Calu3 (cell line): ENCODE measurements at regions of chr14 and their contacts with region 1.

Region 1: GRCh38 chr14:94636522-94637412 is 24.6 kb downstream of the SERPINA3 start:
- DNase-seq: no peak
- H3K4me3 Mint-ChIP-seq: no peak overlapping the region
- H3K27ac Mint-ChIP-seq: no peak overlapping the region
- H3K4me1 Mint-ChIP-seq: peaks cover 24% of the 10 kb centered on the region
- H3K27me3 Mint-ChIP-seq: peaks cover 20% of the 10 kb centered on the region
- CTCF ChIP-seq: peak; percentile 29

Region 2: DNA sequence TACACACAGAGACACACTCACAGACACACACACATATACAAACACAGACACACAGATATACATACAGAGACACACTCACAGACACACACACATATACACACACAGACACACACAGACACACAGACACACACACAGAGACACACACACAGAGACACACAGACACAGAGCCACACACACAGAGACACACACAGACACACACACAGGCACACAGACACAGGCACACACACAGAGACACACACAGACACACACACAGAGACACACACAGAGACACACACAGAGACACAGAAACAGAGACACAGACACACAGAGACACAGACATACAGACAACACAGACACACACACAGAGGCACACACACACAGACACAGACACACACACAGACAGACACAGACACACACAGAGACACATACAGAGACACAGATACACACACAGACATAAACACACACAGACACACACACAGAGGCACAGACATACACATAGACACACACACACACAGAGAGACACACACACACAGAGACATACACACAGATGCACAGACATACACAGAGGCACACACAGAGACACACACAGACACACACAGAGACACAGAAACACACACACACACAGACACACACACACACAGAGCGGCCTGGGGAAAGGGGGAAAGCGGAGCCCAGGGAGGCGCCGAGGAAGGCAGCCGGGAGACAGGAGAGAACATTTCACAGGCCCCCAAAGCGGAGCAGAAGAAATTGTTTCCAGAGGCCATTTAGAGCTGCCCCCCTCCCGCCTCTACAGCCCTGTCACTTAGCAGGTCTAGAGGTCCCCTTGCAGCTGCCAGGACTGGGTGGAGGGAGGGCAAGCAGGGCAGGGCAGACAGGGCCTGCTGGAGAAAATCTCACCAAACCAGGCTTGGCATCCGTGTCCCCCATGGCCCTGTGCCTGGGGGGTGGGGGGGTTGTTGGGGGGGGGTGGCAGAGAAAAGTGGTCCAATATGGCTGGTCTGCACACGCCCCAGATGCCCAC is 14.3 kb after region 1 on chr14:
- CTCF ChIA-PET with region 1: no interaction called
- intact Hi-C with region 1: no loop called
- DNase-seq: no peak
- H3K4me3 Mint-ChIP-seq: no peak overlapping the region
- H3K27ac Mint-ChIP-seq: no peak overlapping the region
- H3K4me1 Mint-ChIP-seq: no peaks in the 10 kb centered on the region
- H3K27me3 Mint-ChIP-seq: no peaks in the 10 kb centered on the region
- CTCF ChIP-seq: no peak

Region 3: DNA sequence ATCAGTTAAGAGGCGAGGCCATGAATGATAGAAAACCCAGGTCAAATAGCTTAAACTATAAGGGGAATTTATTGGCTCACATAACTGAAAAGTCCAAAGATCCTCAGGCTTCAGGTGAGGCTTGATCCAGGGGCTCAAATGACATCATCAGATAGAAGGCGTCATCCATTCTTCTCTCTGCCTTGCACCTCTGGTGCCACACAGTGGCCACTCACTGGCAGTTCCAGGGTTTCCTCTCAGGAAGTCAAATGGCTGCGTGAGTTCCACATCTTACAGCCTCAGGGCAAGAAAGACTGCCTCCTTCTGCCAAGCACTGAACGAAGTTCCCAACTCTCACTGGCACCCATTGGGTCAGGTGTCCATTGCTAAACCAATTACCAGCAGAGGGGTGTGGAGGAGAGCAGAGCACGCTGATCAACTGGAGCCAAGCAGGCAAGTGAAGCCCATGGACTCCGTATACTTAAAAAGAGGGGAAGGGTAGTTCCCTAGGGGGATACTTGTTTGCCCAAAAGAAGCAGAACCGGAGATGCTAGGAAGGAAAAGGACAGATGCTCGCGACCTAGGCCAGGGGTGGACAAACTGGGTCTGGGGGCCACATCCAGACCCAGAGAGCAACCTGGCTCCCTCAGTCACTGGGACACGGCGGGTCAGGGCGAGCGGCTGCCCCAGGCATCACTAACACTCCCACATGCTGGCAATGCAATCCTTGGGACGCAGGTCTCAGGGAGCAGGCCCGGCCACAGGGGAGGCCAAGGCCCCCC is 44.7 kb after region 1 on chr14:
- CTCF ChIA-PET with region 1: no interaction called
- intact Hi-C with region 1: loop called (anchors 5 kb)
- DNase-seq: peak; percentile 58
- H3K4me3 Mint-ChIP-seq: no peak overlapping the region
- H3K27ac Mint-ChIP-seq: no peak overlapping the region
- H3K4me1 Mint-ChIP-seq: no peaks in the 10 kb centered on the region
- H3K27me3 Mint-ChIP-seq: no peaks in the 10 kb centered on the region
- CTCF ChIP-seq: peak; percentile 38